PC-9 (cell line): ENCODE measurements at regions of chr2 and their contacts with region 1.

Region 1: GRCh38 chr2:72150157-72150865 is 2.6 kb upstream of the CYP26B1 start:
- DNase-seq: peak; percentile 72 to 81
- H3K4me3 ChIP-seq: no peak overlapping the region
- H3K27ac ChIP-seq: no peak overlapping the region
- H3K4me1 ChIP-seq: peaks cover 30% of the 10 kb centered on the region
- H3K27me3 ChIP-seq: peaks cover 11% of the 10 kb centered on the region; the same call in 1 of the 2 replicates
- CTCF ChIP-seq: peak; percentile 94

Region 2: DNA sequence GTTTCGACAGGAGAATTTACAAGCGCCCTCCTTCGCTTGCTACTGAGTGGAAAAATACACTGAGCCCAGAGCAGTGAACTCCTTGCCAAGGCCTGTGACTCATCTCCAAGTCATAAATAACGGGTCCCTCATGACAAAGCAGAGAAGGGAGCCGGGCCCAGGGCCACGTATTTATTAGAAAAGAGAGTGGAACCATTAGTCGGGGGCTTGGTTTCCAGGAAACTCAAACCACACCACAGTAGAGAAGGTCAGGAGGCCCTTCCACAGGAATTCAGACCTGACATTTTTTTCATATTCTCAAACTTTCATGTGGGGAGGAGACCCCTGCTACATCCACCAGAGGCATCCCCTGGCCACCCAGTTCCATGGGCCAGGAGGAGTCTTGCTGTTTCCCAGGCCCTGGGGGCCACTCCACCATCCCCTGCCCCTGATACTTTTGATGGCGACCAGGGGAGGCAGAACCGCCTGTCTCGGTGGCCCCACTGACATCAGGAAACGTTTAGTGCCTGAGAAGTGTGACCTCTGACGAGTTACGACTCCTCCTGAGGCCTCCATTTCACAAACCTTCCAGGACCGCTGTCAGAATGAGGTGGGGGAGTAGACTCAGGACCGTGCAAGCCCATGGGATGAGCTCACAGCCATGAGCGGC is 407.2 kb before region 1 on chr2:
- CTCF ChIA-PET with region 1: no interaction called
- POLR2A ChIA-PET with region 1: no interaction called
- intact Hi-C with region 1: loop called (anchors 5 kb)
- DNase-seq: peak; percentile 58 to 90
- H3K4me3 ChIP-seq: no peak overlapping the region
- H3K27ac ChIP-seq: no peak overlapping the region
- H3K4me1 ChIP-seq: peaks cover 74% of the 10 kb centered on the region
- H3K27me3 ChIP-seq: no peaks in the 10 kb centered on the region
- CTCF ChIP-seq: no peak

Region 3: DNA sequence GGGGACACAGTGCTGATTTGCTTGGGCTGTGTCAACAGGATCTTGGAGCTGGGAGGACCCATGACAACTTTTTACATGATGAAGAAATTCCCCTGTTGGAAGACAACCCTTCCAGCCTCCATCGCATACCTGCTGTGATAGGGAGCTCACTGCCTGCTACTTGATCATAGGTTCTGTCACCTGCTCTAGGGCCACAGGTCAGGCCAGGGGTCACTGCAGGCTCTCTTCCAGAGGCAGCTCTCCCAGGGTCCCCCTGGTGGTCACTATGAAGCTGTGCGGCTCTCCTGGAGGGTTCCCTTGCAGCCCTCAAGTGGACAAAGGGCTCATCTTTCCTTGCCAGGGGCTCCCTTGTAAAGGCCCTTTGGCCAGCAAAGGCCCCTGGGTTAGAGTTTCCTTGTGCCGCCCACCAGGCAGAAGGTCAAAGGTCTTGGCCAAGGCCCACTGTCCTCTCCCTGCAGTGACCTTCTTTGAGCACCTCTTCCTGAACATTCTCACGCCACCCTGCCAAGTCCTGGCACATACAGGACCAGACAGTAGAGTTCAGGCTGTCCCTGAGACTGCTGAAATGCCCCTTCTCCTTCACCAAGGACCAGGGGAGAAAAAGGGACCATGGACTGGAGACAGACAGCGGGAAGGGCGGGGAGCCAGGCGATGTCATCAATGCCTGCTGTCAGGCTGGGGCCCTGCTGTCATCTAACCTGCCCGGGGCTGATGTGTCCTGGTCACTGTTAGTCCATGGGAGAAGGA is 351.9 kb before region 1 on chr2:
- CTCF ChIA-PET with region 1: no interaction called
- POLR2A ChIA-PET with region 1: no interaction called
- intact Hi-C with region 1: loop called (anchors 5 kb)
- DNase-seq: no peak
- H3K4me3 ChIP-seq: no peak overlapping the region
- H3K27ac ChIP-seq: no peak overlapping the region
- H3K4me1 ChIP-seq: peaks cover 34% of the 10 kb centered on the region
- H3K27me3 ChIP-seq: no peaks in the 10 kb centered on the region
- CTCF ChIP-seq: peak; percentile 92

Region 4: DNA sequence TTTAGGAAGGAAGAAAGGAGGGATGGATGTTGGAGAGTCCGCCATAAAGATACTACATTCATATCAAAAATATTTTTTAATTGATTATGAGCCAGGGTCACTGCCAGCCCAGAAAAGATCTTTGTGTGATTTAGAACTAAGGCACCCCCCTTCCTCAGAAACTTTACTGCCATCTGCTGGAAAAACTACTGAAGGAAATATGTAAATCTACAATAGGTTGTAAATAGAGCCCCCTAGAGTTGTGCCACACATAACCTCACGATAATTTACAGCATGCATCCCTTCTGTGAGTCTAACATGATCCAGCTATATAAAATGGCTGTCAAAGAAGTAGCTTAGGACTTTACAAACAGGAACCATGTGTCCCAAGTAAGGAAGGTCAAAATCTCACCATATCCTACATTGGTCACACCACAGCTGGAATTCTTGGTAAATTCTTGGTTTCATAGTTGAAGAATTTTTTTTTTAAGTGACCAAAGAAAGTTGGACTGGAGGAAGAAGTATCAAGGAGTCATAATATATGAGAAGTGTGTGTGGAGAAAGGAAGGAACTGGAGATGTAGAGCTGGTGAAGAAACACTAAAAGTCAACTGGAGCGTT is 155.1 kb before region 1 on chr2:
- CTCF ChIA-PET with region 1: interaction called, 3 read pairs
- POLR2A ChIA-PET with region 1: no interaction called
- intact Hi-C with region 1: loop called (anchors 2 kb)
- DNase-seq: peak in 1 of 2 experiments; percentile 41
- H3K4me3 ChIP-seq: no peak overlapping the region
- H3K27ac ChIP-seq: no peak overlapping the region
- H3K4me1 ChIP-seq: no peaks in the 10 kb centered on the region
- H3K27me3 ChIP-seq: no peaks in the 10 kb centered on the region
- CTCF ChIP-seq: peak; percentile 72

Region 5: DNA sequence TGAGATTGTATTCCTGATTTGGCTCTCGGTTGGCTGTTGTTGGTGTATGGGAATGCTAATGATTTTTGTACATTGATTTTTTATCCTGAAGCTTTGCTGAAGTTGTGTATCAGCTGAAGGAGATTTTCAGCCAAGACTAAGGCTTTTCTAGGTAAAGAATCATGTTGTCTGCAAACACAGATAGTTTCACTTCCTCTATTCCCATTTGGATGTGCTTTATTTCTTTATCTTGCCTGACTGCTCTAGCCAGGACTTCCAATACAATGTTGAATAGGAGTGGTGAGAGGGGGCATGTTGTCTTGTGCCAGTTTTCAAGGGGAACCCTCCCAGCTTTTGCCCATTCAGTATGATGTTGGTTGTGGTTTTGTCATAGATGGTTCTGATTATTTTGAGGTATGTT is 93.0 kb before region 1 on chr2:
- CTCF ChIA-PET with region 1: no interaction called
- POLR2A ChIA-PET with region 1: no interaction called
- intact Hi-C with region 1: no loop called
- DNase-seq: no peak
- H3K4me3 ChIP-seq: no peak overlapping the region
- H3K27ac ChIP-seq: no peak overlapping the region
- H3K4me1 ChIP-seq: no peaks in the 10 kb centered on the region
- H3K27me3 ChIP-seq: no peaks in the 10 kb centered on the region
- CTCF ChIP-seq: no peak

Region 6: DNA sequence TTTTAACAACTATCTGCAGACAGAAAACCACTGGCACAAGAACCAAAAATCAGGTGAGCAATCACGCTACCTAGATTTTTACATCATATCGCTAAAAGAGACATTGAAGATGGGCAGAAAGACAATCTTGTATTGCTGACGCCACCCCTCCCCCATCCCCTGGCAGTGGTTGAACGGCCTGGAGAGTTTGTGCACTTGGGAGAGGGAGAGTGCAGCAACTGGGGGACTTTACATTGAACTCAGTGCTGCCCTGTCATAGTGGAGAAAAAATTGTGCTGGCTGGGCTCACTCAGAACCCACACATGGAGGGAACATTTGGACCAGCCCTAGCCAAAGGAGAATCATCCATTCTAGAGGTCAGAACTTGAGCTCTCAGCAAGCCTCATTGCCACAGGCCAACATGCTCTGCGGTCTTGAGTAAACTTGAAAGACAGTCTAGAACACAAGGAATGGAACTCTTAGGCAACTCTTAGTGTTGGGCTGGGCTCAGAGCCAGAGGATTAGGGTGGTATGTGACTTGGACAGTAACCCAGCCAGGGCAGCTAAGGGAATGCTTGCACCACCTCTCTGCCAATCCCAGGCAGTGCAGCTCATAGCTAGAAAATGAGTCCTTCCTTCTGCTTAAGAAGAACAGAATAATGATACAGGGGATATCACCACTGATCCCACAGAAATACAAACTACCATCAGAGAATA is 217.4 kb after region 1 on chr2:
- CTCF ChIA-PET with region 1: interaction called, 5 read pairs
- POLR2A ChIA-PET with region 1: no interaction called
- intact Hi-C with region 1: loop called (anchors 5 kb)
- DNase-seq: peak; percentile 84 to 97
- H3K4me3 ChIP-seq: no peak overlapping the region
- H3K27ac ChIP-seq: no peak overlapping the region
- H3K4me1 ChIP-seq: no peaks in the 10 kb centered on the region
- H3K27me3 ChIP-seq: no peaks in the 10 kb centered on the region
- CTCF ChIP-seq: peak; percentile 67

Region 7: DNA sequence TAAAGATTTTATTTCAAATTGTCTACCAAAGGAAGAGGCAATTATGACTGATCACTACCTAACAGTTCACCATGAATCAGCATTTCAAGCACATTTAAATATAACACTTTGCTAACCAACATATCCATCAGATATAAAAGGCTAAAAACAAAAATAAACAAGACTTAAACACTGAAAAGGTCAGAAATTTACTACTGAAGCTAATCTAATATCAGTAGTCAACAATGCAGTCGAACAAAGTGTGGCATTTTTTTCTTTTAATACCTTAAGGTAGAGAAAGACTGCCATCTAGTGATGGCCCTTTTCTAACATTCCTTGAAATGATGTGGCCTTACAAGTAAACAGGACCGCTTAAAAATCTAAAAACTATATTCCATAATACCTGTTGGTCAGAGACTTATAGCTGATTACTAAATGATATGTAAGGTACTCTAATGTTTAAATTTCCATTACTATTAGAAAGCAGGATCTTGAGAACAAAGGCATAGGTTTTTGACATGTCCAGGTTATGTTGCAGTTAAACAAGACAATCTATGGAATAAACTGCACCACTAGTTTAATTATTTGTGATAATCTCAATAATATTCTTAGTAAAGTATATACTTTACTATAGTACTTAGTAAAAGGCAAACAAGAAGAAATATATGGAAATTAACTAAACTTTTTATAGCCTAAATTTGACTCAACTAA is 595.5 kb after region 1 on chr2:
- CTCF ChIA-PET with region 1: interaction called, 6 read pairs
- POLR2A ChIA-PET with region 1: no interaction called
- intact Hi-C with region 1: loop called (anchors 2 kb)
- DNase-seq: peak in 1 of 2 experiments; percentile 62
- H3K4me3 ChIP-seq: no peak overlapping the region
- H3K27ac ChIP-seq: no peak overlapping the region
- H3K4me1 ChIP-seq: peaks cover 6% of the 10 kb centered on the region; the same call in 1 of the 2 replicates
- H3K27me3 ChIP-seq: no peaks in the 10 kb centered on the region
- CTCF ChIP-seq: peak; percentile 90

Region 8: GRCh38 chr2:72833084-72833709 is 682.9 kb after region 1 on chr2:
- CTCF ChIA-PET with region 1: no interaction called
- POLR2A ChIA-PET with region 1: no interaction called
- intact Hi-C with region 1: no loop called
- DNase-seq: no peak
- H3K4me3 ChIP-seq: no peak overlapping the region
- H3K27ac ChIP-seq: no peak overlapping the region
- H3K4me1 ChIP-seq: peaks cover 15% of the 10 kb centered on the region
- H3K27me3 ChIP-seq: no peaks in the 10 kb centered on the region
- CTCF ChIP-seq: no peak